Psoas muscle (tissue), 8 donors: ENCODE measurements at regions of chr14 and their contacts with region 1.

Region 1: DNA sequence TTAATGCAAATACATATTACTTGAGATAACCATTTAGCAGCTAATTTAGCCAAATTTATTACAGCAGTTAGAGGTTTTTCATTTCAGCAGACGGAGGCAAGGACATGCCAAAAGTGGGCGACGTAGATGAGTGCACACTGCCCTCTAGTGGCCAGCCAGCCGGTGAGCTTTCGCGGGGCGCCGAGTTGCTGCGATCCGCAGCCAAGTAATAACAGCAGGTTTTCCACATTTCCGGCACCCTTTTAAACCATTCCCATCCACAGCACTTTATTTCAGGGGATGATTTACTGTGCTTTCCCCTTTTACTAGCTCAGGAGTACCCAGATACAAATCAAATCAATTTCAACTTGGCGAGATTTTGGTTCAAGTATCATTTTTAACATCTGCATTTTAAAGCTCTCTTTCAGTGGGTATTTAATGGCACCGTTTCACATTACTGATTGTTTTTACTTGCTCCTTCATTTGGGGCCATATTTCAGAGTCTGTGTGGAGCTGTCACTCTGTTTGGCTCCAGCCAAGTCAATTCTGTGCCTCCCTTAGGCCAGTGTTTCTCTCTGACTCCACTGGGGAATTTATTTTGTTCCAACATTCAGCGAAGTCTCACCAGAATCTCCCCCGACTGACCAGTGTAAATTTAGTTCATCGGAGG is 158.0 kb downstream of the EGLN3 start:
- DNase-seq: peak; percentile 71 to 86
- ATAC-seq: peak; percentile 84 to 97 (median 88)
- H3K4me3 ChIP-seq: peak overlapping the region; percentile 58
- H3K27ac ChIP-seq: no peak overlapping the region
- H3K4me1 ChIP-seq: peaks cover 4% of the 10 kb centered on the region
- H3K27me3 ChIP-seq: no peaks in the 10 kb centered on the region
- CTCF ChIP-seq: peak; percentile 96

Region 2: DNA sequence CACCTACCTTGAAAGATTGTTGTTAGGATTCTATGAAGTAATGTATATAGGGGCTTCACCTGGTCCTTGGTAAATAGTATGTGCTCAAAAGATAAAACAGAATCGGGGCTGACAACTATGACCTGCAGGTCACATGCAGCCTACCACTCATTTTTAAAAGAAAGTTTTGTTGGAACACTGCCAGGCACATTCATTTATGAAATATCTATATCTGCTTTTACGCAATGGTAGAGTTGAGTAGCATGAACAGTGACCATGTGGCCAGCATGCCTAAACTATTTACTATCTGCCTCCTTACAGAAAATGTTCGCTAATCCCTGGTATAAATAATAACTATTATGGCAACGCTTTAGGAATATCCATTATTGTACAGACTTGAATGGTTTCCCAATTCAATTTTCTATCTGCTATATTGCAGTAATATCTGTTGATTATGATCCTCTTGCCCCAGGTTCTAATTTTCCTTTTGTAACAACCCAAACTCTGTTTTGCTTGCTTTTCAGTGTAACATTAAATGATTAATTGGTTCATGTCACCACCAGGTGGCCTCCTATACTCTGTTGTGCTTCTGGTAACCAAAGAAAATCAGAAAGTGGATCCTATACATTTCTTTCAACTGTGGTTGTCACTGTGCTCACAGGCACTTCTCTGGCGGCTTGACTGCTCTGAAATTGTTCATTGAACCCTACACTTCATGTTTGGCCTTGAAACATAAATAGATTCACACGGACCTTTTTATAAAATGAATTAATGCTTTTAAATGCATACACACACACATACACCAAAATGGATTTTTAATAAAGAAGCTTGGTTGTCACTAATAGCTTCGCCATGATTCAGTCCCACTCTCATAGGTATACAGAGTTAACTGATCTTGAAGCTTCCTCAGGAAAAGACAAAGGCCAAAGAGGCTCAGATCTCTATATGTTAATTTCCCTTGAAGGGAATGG is 1081.8 kb before region 1 on chr14:
- intact Hi-C with region 1: loop called in 1 of 2 experiments (anchors 10 kb)
- DNase-seq: no peak
- ATAC-seq: peak in 3 of 4 donors; percentile 37 to 44 (median 42)
- H3K4me3 ChIP-seq: no peak overlapping the region
- H3K27ac ChIP-seq: no peak overlapping the region
- H3K4me1 ChIP-seq: peaks cover 40% of the 10 kb centered on the region
- H3K27me3 ChIP-seq: no peaks in the 10 kb centered on the region
- CTCF ChIP-seq: peak; percentile 58

Region 3: GRCh38 chr14:33676135-33676566 is 116.7 kb before region 1 on chr14:
- intact Hi-C with region 1: loop called (anchors 5 to 10 kb)
- DNase-seq: peak in 1 of 2 donors; percentile 63
- ATAC-seq: peak; percentile 83 to 99 (median 92)
- H3K4me3 ChIP-seq: peak overlapping the region; percentile 44
- H3K27ac ChIP-seq: no peak overlapping the region
- H3K4me1 ChIP-seq: no peaks in the 10 kb centered on the region
- H3K27me3 ChIP-seq: no peaks in the 10 kb centered on the region
- CTCF ChIP-seq: peak; percentile 44